ENCODE measurements at regions of chr4 and their contacts with region 1.

Region 1: GRCh38 chr4:87679449-87680169 is 29.5 kb downstream of the DMP1 start:
- DNase-seq: peak; percentile 35 to 66 (median 53)
- H3K4me3 ChIP-seq: no peak overlapping the region
- H3K27ac ChIP-seq: no peak overlapping the region
- H3K4me1 ChIP-seq: peaks cover 2% of the 10 kb centered on the region
- H3K27me3 ChIP-seq: no peaks in the 10 kb centered on the region
- CTCF ChIP-seq: peak; percentile 36 to 60 (median 48)
- EP300 ChIP-seq: no peak
- POLR2A ChIP-seq: no peak

Region 2: DNA sequence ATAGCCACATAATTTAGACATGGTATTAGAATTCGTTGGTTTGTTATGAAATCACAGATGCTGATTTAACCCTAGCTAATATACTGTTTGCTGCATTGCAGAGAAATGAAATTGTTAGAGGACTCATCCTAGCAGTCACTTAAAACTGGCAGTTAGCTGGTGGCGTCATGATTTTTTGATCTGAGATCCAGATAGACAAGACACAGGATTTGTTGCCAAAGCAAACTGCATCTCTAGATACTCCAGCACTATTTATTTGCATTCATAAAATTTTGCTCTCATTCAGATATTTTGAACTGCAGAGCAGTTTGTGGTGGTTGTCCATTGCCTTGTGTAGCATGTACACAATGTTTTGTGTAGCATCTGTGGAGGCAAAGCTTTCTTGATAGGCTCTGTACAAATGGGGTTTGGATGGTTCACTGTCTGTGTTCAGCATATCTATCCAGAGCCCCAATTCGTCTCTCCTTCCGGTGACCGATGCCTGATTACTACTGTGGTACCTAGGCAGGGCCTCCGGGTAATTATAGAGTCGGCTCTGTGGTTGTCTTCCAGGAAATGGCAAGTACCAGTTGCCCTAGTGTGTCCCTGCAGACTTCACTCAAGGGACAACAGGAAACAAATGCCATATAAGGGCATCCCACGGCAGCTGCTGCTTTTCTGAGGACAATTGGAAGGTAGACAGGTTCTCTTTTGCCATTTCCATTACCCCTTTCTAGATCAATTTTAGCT is 120.3 kb before region 1 on chr4:
- intact Hi-C with region 1: no loop called
- DNase-seq: no peak
- H3K4me3 ChIP-seq: no peak overlapping the region
- H3K27ac ChIP-seq: no peak overlapping the region
- H3K4me1 ChIP-seq: no peaks in the 10 kb centered on the region
- H3K27me3 ChIP-seq: no peaks in the 10 kb centered on the region
- CTCF ChIP-seq: no peak
- EP300 ChIP-seq: no peak
- POLR2A ChIP-seq: no peak

Region 3: DNA sequence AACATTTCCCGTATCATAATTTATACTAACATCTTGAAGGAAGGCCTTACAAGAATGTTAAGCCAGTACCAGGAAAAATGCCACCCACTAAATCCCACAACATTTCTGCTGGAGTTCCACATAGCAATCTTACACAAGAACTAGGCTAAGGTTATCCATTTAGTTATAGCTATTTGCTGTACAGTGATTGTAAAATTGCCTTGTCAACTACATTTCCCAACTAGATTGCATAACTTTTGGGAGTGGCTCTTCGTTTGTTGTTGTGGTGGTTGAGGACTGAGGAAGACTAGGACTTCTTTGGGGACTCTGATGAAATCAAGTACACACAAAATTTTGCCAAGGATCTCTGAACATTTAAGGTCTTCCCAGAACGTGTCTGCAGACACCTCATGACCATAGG is 127.8 kb after region 1 on chr4:
- intact Hi-C with region 1: no loop called
- DNase-seq: no peak
- H3K4me3 ChIP-seq: no peak overlapping the region
- H3K27ac ChIP-seq: no peak overlapping the region
- H3K4me1 ChIP-seq: no peaks in the 10 kb centered on the region
- H3K27me3 ChIP-seq: no peaks in the 10 kb centered on the region
- CTCF ChIP-seq: no peak
- EP300 ChIP-seq: no peak
- POLR2A ChIP-seq: no peak

Region 4: DNA sequence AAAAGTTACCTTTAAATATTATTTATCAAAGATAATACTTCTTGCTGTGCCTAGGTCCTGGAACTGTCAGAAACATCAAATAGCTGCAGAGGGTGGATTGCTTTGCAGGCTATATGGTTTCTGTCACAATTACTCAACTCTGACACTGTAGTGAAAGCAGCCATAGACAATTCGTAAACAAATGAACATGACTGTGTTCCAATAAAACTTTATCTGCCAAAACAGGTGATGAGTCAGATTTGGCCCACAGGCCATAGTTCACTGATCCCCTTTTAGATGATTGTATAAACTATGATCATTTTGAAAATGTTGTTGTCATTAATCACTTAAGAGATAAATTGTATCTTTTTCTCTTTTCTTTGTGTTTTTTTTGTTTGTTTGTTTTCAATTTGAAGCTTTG is 144.7 kb after region 1 on chr4:
- intact Hi-C with region 1: loop called in 1 of 4 experiments (anchors 10 kb)
- DNase-seq: no peak
- H3K4me3 ChIP-seq: no peak overlapping the region
- H3K27ac ChIP-seq: no peak overlapping the region
- H3K4me1 ChIP-seq: no peaks in the 10 kb centered on the region
- H3K27me3 ChIP-seq: no peaks in the 10 kb centered on the region
- CTCF ChIP-seq: no peak
- EP300 ChIP-seq: no peak
- POLR2A ChIP-seq: no peak

Region 5: DNA sequence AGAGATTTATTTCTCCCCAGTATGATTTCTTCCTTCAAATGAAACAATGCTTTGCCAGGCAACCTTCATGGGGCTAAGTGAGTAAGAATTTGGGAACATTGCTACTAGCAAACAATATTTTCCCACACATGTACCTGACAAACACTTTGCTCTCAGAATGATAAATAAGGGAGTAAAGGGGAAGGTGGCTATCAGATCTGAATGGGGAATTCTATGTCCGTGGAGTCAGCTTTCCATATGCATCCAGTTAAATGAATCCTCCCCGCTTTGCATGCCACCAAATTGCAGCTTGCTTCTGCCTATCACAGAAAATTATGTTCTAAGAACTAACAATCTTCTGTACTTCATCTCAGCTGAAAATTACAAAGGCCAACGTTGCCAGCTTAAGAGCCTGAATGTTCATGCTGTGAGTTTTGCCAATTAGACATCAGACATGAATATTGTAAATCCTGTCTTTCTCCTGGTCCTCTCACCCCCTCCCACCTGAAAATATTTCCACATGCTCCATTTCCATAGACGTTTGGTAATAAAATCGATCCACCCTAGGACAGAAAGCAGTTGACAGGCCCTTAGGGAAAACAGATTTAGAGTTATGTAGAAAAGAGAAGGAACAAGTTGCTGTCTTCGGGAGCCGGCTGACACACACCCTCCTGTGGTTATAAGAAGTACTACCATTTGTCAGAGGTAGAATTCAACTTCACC is 159.4 kb after region 1 on chr4:
- intact Hi-C with region 1: loop called in 1 of 4 experiments (anchors 2 kb)
- DNase-seq: peak in 1 of 5 donors; percentile 25
- H3K4me3 ChIP-seq: no peak overlapping the region
- H3K27ac ChIP-seq: no peak overlapping the region
- H3K4me1 ChIP-seq: no peaks in the 10 kb centered on the region
- H3K27me3 ChIP-seq: no peaks in the 10 kb centered on the region
- CTCF ChIP-seq: peak; percentile 38 to 59 (median 54)
- EP300 ChIP-seq: no peak
- POLR2A ChIP-seq: no peak

Measured in ovary (tissue), 10 donors.